Psoas muscle (tissue), 8 donors: ENCODE measurements at regions of chr11 and their contacts with region 1.

Region 1: GRCh38 chr11:44927174-44927661 is 23.5 kb downstream of the TP53I11 start:
- DNase-seq: peak; percentile 65 to 86
- ATAC-seq: peak; percentile 62 to 85 (median 65)
- H3K4me3 ChIP-seq: no peak overlapping the region
- H3K27ac ChIP-seq: no peak overlapping the region
- H3K4me1 ChIP-seq: no peaks in the 10 kb centered on the region
- H3K27me3 ChIP-seq: peaks cover 0 to 8% (median 0%) of the 10 kb centered on the region in 3 donors
- CTCF ChIP-seq: peak; percentile 89

Region 2: GRCh38 chr11:44823006-44823405 is 104.2 kb before region 1 on chr11:
- intact Hi-C with region 1: no loop called
- DNase-seq: no peak
- ATAC-seq: no peak
- H3K4me3 ChIP-seq: no peak overlapping the region
- H3K27ac ChIP-seq: no peak overlapping the region
- H3K4me1 ChIP-seq: no peaks in the 10 kb centered on the region
- H3K27me3 ChIP-seq: no peaks in the 10 kb centered on the region
- CTCF ChIP-seq: no peak

Region 3: GRCh38 chr11:45102810-45103621 is 175.8 kb after region 1 on chr11:
- intact Hi-C with region 1: loop called (anchors 2 kb)
- DNase-seq: peak; percentile 59 to 74
- ATAC-seq: peak; percentile 65 to 80 (median 74)
- H3K4me3 ChIP-seq: no peak overlapping the region
- H3K27ac ChIP-seq: no peak overlapping the region
- H3K4me1 ChIP-seq: peaks cover 3% of the 10 kb centered on the region
- H3K27me3 ChIP-seq: peaks cover 0 to 2% (median 0%) of the 10 kb centered on the region in 3 donors
- CTCF ChIP-seq: peak; percentile 98